ENCODE measurements at regions of chr22 and their contacts with region 1.

Region 1: DNA sequence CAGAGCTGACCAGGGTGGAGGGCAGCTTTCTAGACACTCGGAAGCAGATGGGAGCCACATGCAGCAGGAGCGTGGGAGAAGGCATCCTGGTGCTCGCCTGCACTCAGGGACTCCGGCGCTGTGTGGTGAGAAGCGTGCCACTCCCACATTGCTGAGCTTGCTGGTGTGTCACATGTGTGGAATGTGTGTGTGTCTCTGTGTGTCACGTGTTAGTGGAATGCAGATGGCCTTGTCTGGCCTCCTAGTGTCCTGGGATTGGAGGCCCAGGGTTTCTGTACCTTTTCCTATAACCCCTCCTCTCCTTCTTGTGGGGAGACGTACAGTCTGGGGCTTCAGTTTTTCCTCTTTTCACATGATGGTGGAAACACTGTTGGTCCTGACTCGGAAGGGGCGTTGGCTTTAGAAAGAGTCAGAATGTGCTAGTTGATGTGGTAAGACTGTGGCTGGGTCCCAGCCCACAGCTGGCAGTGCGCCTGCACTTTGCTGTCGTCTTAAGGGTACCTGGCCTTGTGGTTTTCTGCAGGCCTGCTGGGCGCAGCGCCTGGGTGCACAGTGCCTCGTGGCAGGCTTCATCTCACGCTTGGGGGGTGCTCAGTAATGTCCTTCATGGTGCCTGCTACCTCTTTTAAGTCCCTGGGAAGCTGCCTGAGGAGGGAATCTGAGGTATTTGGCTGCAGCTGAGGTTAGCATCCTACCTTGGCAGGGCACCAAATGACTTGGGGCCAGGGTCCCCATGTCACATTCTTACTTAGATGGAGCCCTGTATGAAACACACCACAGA is 61.8 kb downstream of the MED15 start:
- H3K4me3 ChIP-seq: no peak overlapping the region
- H3K27ac ChIP-seq: no peak overlapping the region
- H3K4me1 ChIP-seq: no peaks in the 10 kb centered on the region
- CTCF ChIP-seq: no peak

Region 2: GRCh38 chr22:20523086-20523983 is 45.8 kb before region 1 on chr22:
- CTCF ChIA-PET with region 1: interaction called, 27 read pairs
- POLR2A ChIA-PET with region 1: no interaction called
- H3K4me3 ChIP-seq: no peak overlapping the region
- H3K27ac ChIP-seq: no peak overlapping the region
- H3K4me1 ChIP-seq: peaks cover 6% of the 10 kb centered on the region; the same call in 1 of the 2 replicates
- CTCF ChIP-seq: no peak

Region 3: GRCh38 chr22:20536590-20537324 is 32.4 kb before region 1 on chr22:
- CTCF ChIA-PET with region 1: interaction called, 40 read pairs
- POLR2A ChIA-PET with region 1: no interaction called
- H3K4me3 ChIP-seq: no peak overlapping the region
- H3K27ac ChIP-seq: no peak overlapping the region
- H3K4me1 ChIP-seq: peaks cover 2% of the 10 kb centered on the region
- CTCF ChIP-seq: no peak

Region 4: DNA sequence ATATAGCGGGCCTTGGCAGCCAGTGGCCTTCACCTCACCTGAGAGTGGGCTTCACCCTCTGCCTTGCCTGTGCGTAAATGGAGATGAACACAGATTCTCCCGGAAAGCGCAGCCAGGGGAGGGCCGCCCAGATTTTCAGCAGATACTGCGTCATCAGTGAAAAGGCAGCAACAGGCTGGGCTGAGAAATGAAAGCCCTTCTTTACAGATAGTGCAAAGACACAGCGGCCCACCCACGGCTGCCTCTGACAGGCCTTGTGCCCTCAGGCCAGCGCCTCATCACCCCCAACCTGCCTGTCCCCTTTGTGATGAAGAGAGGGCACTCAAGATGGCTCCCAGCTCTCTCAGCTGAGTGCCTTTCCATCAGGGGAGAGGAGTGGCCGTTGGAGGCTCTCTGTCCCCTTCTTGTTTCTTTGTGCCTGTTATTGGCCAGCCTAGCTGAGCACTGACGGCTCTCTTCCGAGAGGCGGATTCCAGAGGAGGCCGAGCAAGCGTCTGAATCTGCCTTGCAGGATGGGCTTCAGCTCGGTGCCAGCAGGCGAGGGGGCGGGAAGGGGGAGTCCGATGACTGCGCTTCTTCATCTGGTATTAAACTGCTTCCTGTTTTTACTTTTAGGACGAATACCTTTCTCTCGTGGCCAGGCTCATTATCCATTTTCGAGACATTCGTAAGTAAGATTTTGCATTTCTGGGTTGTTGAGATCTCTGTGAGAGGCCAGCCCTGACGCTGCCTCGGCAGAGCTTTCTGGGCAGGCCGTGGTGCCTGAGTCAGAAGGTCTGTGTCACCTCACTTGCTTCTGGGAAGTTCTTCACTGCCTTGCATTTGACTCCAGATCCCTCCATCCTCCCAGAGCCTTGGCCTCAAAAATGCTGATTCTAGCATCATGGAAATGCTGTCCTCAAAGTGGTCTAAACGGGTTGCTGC is 18.1 kb before region 1 on chr22:
- CTCF ChIA-PET with region 1: interaction called, 72 read pairs
- POLR2A ChIA-PET with region 1: interaction called, 3 read pairs
- H3K4me3 ChIP-seq: no peak overlapping the region
- H3K27ac ChIP-seq: no peak overlapping the region; the same call in 1 of the 2 replicates
- H3K4me1 ChIP-seq: peaks cover 11% of the 10 kb centered on the region
- CTCF ChIP-seq: no peak

Region 5: GRCh38 chr22:20583471-20583922 is 14.3 kb after region 1 on chr22:
- CTCF ChIA-PET with region 1: interaction called, 21 read pairs
- POLR2A ChIA-PET with region 1: interaction called, 3 read pairs
- H3K4me3 ChIP-seq: no peak overlapping the region
- H3K27ac ChIP-seq: no peak overlapping the region
- H3K4me1 ChIP-seq: no peaks in the 10 kb centered on the region
- CTCF ChIP-seq: peak; percentile 23; the same call in 1 of the 2 replicates